CD4-positive, alpha-beta T cell (primary cell): ENCODE measurements at regions of chr2 and their contacts with region 1.

Region 1: DNA sequence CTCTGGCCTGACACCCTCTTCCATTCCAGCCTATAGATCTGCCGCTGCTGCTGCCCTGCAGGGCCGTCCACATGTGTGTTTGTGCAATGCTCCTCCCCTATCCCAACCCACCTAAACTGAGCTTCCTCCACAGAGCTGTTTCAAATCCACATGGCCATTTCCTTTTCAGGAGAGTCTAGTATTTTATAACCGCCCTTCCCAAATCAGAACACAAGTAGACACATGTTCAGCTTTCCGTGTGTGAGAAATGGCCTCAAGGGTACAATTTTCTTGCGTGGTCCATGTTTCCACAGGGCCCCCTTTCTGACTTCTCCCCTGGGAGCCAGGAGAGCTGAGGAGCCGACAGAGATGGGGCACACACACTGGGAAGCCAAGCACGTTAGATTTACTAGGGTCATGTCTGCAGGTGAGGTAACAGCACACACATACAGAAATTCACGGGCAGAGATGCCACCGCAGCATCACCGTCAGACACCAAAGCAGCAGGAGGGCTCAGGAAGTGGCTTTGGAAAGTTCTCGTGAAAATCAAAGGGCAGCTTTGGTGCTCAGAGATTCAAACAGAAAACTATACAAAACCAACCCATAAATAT is 102.9 kb upstream of the TGFA start:
- DNase-seq: peak in 11 of 14 experiments; percentile 18 to 71 (median 44)
- ATAC-seq: peak; percentile 87
- H3K4me3 ChIP-seq: no peak overlapping the region
- H3K4me3 Mint-ChIP-seq: peak overlapping the region; percentile 9
- H3K27ac ChIP-seq: peak overlapping the region in 1 of 2 donors; percentile 34
- H3K27ac Mint-ChIP-seq: peak overlapping the region; percentile 82
- H3K4me1 ChIP-seq: peaks cover 24% of the 10 kb centered on the region
- H3K4me1 Mint-ChIP-seq: peaks cover 36% of the 10 kb centered on the region
- H3K27me3 ChIP-seq: peaks cover 4% of the 10 kb centered on the region in 2 experiments
- H3K27me3 Mint-ChIP-seq: peaks cover 8% of the 10 kb centered on the region
- CTCF ChIP-seq: no peak

Region 2: DNA sequence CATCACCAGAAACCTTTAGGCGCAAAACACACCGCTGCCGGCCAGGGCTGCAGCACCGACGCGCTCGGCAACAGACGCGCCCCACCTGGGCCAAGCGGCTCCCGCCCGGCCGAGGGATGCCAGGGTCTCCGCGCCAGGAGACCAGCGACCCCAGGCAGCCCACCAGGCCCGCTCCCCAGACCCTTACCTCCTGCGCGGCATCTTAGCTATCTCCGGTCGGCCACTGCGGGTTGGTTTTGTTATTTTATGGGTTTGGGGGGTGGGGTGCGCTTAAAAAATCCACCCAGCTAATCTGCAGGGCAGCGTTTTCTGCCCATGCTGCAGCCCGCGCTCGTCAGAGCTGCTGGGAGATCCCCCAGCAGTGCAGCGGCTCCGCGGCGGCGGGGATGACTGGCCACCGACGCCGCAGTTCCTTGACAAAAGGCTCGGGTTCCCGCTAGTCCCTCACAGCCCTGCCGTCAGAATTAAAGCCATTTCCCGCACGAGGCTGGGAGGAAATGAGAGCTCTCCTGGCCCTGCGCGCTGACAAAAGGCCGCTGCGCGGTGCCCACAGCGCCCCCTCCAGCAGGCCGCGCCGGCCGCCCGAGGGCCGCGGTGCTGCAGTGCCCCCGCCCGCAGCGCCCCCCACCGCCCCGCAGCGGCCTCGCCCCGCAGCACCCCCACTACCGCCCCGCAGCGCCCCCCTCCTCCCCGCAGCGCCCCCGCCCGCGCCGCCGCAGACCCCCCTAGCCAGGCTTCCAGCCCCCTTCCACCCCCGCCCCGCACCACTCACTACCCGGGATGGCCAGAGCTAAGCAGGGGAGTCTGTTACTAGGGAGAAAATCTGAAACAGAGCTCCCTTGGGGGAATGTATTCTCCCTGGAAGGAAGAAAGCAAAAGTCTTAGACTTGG is 111.4 kb after region 1 on chr2 and contains the start of gene ADD2:
- CTCF ChIA-PET with region 1: no interaction called
- POLR2A ChIA-PET with region 1: no interaction called
- intact Hi-C with region 1: loop called in 1 of 2 experiments (anchors 5 kb)
- DNase-seq: peak in 12 of 14 experiments; percentile 7 to 72 (median 30)
- ATAC-seq: peak; percentile 68
- H3K4me3 ChIP-seq: peak within 1 kb of the TSS; percentile 62
- H3K4me3 Mint-ChIP-seq: peak within 1 kb of the TSS; percentile 88
- H3K27ac ChIP-seq: no peak within 1 kb of the TSS
- H3K27ac Mint-ChIP-seq: peak within 1 kb of the TSS; percentile 38
- H3K4me1 ChIP-seq: peaks cover 14% of the 10 kb centered on the region
- H3K4me1 Mint-ChIP-seq: peaks cover 16% of the 10 kb centered on the region
- H3K27me3 ChIP-seq: peaks cover 21 to 34% of the 10 kb centered on the region in 2 experiments
- H3K27me3 Mint-ChIP-seq: peaks cover 60% of the 10 kb centered on the region
- CTCF ChIP-seq: peak; percentile 31
- total RNA-seq, gene ADD2: 4.4 to 6.4 TPM

Region 3: GRCh38 chr2:70871398-70872211 is 215.1 kb after region 1 on chr2:
- CTCF ChIA-PET with region 1: no interaction called
- POLR2A ChIA-PET with region 1: no interaction called
- intact Hi-C with region 1: loop called (anchors 5 kb)
- DNase-seq: peak; percentile 59 to 88 (median 74)
- ATAC-seq: peak; percentile 92
- H3K4me3 ChIP-seq: no peak overlapping the region
- H3K4me3 Mint-ChIP-seq: no peak overlapping the region
- H3K27ac ChIP-seq: no peak overlapping the region
- H3K27ac Mint-ChIP-seq: no peak overlapping the region
- H3K4me1 ChIP-seq: peaks cover 11% of the 10 kb centered on the region
- H3K4me1 Mint-ChIP-seq: peaks cover 5% of the 10 kb centered on the region
- H3K27me3 ChIP-seq: peaks cover 35 to 48% of the 10 kb centered on the region in 2 experiments
- H3K27me3 Mint-ChIP-seq: peaks cover 61% of the 10 kb centered on the region
- CTCF ChIP-seq: peak; percentile 83

Region 4: DNA sequence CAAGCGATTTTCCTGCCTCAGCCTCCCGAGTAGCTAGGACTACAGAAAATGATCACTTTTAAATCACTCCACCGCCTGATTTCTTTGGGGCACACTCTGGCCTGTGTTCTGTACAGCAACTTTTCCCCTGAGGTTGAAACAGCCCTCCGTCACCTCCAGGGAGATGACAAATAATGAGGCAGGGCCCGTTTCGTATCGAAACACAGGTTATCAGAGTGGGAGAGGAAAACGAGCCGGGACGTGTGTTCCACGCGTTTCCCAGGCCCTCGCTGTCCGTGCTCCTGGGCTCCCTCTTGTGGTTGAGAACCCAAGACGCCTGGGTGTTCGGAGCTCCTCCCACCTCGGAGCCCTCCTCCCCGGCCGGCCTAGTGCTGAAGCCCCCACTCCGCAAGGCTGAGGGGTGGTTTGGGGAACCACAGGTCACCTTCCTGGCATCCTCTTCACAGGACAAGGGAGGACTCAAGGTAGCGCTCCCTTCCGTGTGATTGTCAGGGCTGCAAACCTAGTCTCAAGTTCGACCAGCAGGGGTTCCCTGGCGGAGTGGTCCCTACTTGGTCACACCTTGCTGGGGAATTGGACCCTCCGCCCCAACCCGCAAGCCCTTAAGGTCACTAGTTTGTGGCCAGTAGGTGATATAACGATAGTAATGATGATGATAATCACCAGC is 292.0 kb after region 1 on chr2:
- CTCF ChIA-PET with region 1: interaction called, 7 read pairs
- POLR2A ChIA-PET with region 1: no interaction called
- intact Hi-C with region 1: loop called (anchors 1 to 2 kb)
- DNase-seq: peak; percentile 62 to 87 (median 70)
- ATAC-seq: peak; percentile 95
- H3K4me3 ChIP-seq: peak overlapping the region; percentile 3
- H3K4me3 Mint-ChIP-seq: peak overlapping the region; percentile 79
- H3K27ac ChIP-seq: no peak overlapping the region
- H3K27ac Mint-ChIP-seq: no peak overlapping the region
- H3K4me1 ChIP-seq: peaks cover 13% of the 10 kb centered on the region
- H3K4me1 Mint-ChIP-seq: peaks cover 12% of the 10 kb centered on the region
- H3K27me3 ChIP-seq: peaks cover 2 to 3% of the 10 kb centered on the region in 2 experiments
- H3K27me3 Mint-ChIP-seq: peaks cover 22% of the 10 kb centered on the region
- CTCF ChIP-seq: peak; percentile 95